Posterior vena cava (tissue), 2 donors: ENCODE measurements at regions of chr4 and their contacts with region 1.

Region 1: DNA sequence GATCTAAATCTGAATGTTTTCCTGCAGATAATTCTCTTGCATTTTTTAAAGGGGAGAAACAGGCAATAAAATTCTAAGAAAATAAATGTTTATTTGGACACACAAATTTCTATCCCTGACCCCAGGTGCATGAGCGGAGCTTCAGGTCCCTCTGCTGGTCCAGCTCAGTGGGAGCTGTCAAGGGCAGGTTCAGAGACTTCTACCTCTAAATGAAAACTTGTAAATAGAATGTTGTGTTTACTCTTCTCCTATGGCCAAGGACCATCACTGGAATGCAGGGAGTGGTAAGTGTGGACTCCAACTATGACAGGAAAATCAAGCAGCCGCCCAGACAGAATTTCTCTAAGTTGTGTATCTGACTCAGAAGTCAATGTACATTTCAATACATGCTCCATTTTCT is 148.6 kb upstream of the TTC29 start:
- DNase-seq: no peak

Region 2: GRCh38 chr4:147019061-147019460 is 75.2 kb before region 1 on chr4:
- intact Hi-C with region 1: loop called (anchors 5 to 10 kb)
- DNase-seq: no peak